Activated B cell treated with CpG ODN at 0.5 μM for 24 hours (primary cell): ENCODE measurements at regions of chr19 and their contacts with region 1.

Region 1: GRCh38 chr19:47035127-47036096 is 13.0 kb downstream of the TMEM160 start:
- DNase-seq: peak; percentile 99
- ATAC-seq: peak; percentile 98
- H3K4me3 Mint-ChIP-seq: peak overlapping the region; percentile 95
- H3K27ac Mint-ChIP-seq: peak overlapping the region; percentile 80
- H3K4me1 Mint-ChIP-seq: peaks cover 17% of the 10 kb centered on the region
- H3K27me3 Mint-ChIP-seq: peaks cover 9% of the 10 kb centered on the region
- CTCF ChIP-seq: peak; percentile 87

Region 2: DNA sequence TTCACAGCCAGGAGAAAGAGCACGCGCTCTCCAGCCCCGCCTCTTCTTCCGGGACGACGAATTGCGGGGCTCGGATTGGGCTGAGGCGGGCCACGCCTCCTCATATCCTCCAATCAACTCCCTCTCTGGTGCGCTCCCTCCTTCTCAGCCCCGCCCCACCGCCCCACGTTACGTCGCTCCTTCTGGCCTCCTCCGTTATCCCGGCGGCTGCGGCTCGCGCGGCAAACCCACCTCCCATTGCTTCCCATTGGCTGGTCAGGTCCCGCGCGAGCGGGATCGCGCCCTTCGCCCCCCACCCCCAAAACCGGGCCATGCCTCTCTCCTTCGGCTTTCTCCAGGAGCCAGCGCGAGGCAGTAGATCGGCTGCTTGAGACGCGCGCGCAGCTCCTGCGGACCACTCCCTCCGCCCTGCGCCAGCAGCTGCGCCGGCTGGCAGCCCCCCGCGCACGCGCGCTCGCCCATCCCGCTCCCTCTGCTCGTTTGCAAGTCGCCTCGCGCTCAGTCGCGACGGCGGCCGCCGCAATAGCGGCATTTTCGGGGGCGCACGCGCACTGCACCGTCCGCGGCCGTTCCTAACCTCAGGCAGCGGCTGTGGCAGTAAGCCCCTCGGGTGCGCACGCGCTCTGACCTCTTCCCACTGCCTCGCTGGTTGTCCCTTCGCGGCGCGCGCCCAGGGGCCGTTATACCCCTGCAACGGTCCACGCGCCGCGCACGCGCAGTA is 175.1 kb before region 1 on chr19:
- CTCF ChIA-PET with region 1: interaction called, 8 read pairs
- POLR2A ChIA-PET with region 1: interaction called, 5 read pairs
- intact Hi-C with region 1: loop called (anchors 1 kb)
- DNase-seq: peak; percentile 87
- ATAC-seq: peak; percentile 79
- H3K4me3 Mint-ChIP-seq: peak overlapping the region; percentile 92
- H3K27ac Mint-ChIP-seq: peak overlapping the region; percentile 92
- H3K4me1 Mint-ChIP-seq: peaks cover 26% of the 10 kb centered on the region
- H3K27me3 Mint-ChIP-seq: no peaks in the 10 kb centered on the region
- CTCF ChIP-seq: no peak

Region 3: DNA sequence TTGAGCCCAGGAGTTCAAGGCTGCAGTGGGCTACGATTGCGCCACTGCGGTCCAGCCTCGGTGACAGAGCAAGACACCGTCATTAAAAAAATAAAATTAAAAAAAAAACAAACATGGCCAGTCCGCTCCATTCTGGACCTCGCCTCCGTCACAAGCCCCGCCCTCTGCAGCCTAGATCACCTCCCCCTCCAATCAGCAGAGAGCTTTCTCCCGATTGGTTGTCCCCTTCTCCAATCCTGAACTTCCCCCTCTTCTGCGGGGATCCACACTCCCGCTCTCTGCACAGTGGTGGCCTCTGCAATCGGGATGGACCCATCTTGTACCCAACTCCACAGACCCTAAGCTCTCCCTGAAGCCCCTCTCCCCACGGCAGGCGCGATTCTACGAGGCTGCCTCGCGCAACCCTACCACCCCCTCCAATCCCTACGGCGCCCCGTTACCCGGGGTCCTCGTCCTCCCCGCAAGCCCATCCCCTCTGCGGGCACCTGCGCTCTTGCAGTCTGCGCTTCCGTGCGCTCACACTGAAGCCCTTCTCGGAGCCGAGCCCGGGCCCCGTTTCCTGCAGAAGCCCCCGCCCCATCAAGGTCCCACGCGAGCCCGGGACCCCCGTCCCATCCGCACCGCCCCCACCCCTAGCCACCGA is 12.5 kb after region 1 on chr19:
- CTCF ChIA-PET with region 1: no interaction called
- POLR2A ChIA-PET with region 1: interaction called, 7 read pairs
- intact Hi-C with region 1: loop called (anchors 1 kb)
- DNase-seq: peak; percentile 52
- ATAC-seq: peak; percentile 32
- H3K4me3 Mint-ChIP-seq: peak overlapping the region; percentile 95
- H3K27ac Mint-ChIP-seq: peak overlapping the region; percentile 89
- H3K4me1 Mint-ChIP-seq: peaks cover 15% of the 10 kb centered on the region
- H3K27me3 Mint-ChIP-seq: no peaks in the 10 kb centered on the region
- CTCF ChIP-seq: no peak

Region 4: DNA sequence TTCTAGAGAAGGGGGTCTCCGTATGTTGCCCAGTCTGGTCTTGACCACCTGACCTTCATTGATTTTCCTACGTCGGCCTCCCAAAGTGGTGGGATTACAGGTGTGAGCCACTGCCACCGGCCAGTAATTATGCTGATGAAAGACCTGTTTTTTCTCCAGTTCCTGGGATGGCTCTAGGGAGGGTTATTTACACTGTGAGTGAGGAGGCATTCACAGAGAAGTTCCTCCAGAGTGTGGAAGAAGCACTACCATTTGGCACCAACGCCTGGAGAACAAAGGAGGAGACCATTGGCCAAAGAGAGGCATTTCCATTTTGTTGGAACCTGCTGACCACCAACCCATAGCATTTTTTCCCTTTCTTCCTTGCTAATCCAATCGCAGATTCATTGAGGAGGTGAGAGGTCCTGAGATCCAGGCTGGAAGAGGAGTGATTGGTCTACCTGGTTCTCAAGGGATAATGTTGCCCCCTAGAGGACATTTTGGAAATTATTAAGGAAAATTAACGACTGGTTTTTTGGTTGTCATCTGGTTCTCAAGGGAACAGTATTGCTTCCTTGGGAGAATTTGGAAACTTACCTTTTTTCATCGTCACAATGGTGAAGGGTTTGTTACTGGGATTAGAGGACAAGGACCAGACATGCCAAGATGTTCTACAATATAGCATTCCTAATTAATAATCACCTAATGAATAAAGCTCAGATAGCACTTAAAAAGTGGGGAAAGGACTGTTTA is 89.7 kb after region 1 on chr19:
- CTCF ChIA-PET with region 1: interaction called, 17 read pairs
- POLR2A ChIA-PET with region 1: interaction called, 6 read pairs
- intact Hi-C with region 1: loop called (anchors 1 kb)
- DNase-seq: no peak
- ATAC-seq: peak; percentile 54
- H3K4me3 Mint-ChIP-seq: no peak overlapping the region
- H3K27ac Mint-ChIP-seq: no peak overlapping the region
- H3K4me1 Mint-ChIP-seq: peaks cover 3% of the 10 kb centered on the region
- H3K27me3 Mint-ChIP-seq: no peaks in the 10 kb centered on the region
- CTCF ChIP-seq: no peak